Esophagus muscularis mucosa (tissue), 4 donors: ENCODE measurements at regions of chr2 and their contacts with region 1.

Region 1: GRCh38 chr2:121530212-121530705 is 421 bp upstream of the RNU4ATAC start:
- DNase-seq: peak; percentile 97
- H3K4me3 ChIP-seq: peak overlapping the region; percentile 69 to 86 (median 79)
- H3K27ac ChIP-seq: peak overlapping the region; percentile 91 to 95 (median 94)
- H3K4me1 ChIP-seq: peaks cover 48 to 76% (median 67%) of the 10 kb centered on the region in 4 donors
- H3K27me3 ChIP-seq: no peaks in the 10 kb centered on the region
- CTCF ChIP-seq: no peak
- EP300 ChIP-seq: no peak
- POLR2A ChIP-seq: no peak

Region 2: DNA sequence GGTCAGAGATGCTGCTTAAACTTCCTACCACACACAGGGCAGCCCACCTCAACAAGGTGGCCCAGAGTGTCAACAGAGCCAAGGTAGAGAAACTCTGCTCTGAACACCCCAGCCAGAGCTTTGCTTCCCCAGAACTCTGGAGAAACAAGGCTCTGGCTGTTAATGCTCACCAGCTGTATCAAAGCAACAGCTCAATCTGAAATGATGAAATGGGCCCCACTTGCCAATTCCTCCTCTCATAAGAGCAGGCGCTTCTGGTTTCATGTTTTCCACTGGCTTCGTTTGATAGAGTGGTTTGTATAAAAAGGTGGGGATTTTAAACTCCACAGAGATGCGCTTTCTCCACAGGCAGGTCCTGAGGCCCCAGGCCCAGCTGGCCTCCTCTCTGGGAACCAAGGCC is 184.4 kb before region 1 on chr2:
- intact Hi-C with region 1: no loop called
- DNase-seq: no peak
- H3K4me3 ChIP-seq: no peak overlapping the region
- H3K27ac ChIP-seq: peak overlapping the region in 1 of 4 donors; percentile 15
- H3K4me1 ChIP-seq: no peaks in the 10 kb centered on the region
- H3K27me3 ChIP-seq: no peaks in the 10 kb centered on the region
- CTCF ChIP-seq: no peak
- EP300 ChIP-seq: no peak
- POLR2A ChIP-seq: no peak

Region 3: GRCh38 chr2:121649596-121650314 is 119.5 kb after region 1 on chr2:
- intact Hi-C with region 1: loop called (anchors 2 kb)
- DNase-seq: peak; percentile 97
- H3K4me3 ChIP-seq: peak overlapping the region; percentile 75 to 94 (median 83)
- H3K27ac ChIP-seq: peak overlapping the region; percentile 88 to 97 (median 95)
- H3K4me1 ChIP-seq: peaks cover 43 to 64% (median 55%) of the 10 kb centered on the region in 4 donors
- H3K27me3 ChIP-seq: no peaks in the 10 kb centered on the region
- CTCF ChIP-seq: peak in 1 of 3 experiments; percentile 1
- EP300 ChIP-seq: peak; percentile 10
- POLR2A ChIP-seq: no peak

Region 4: DNA sequence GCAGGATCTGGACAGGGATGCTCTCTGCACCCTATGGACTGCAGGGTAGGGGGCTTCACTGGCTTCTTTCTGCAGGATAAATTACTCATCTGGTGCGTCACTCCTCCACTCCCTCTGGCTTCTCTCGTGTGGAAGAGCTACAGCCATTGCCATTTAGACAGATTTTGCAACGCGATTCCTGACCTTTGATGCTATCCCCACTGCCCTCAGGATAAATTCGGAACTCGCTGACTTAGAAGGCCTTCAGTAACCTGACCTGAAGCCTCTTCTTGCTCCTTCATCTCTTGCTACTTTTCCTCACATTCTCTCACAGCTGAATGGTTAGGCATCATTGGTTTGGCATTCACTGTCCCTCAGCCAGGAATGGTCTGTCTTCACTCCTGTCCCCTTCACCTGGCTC is 201.1 kb after region 1 on chr2:
- intact Hi-C with region 1: loop called (anchors 5 kb)
- DNase-seq: no peak
- H3K4me3 ChIP-seq: no peak overlapping the region
- H3K27ac ChIP-seq: no peak overlapping the region
- H3K4me1 ChIP-seq: peaks cover 9 to 19% (median 12%) of the 10 kb centered on the region in 4 donors
- H3K27me3 ChIP-seq: no peaks in the 10 kb centered on the region
- CTCF ChIP-seq: no peak
- EP300 ChIP-seq: no peak
- POLR2A ChIP-seq: no peak